Heart left ventricle (tissue), 16 donors: ENCODE measurements at regions of chr14 and their contacts with region 1.

Region 1: GRCh38 chr14:80862983-80863382 is 78.6 kb downstream of the CEP128 start:
- DNase-seq: no peak
- ATAC-seq: no peak
- H3K4me3 ChIP-seq: no peak overlapping the region
- H3K27ac ChIP-seq: no peak overlapping the region
- H3K4me1 ChIP-seq: no peaks in the 10 kb centered on the region
- H3K27me3 ChIP-seq: no peaks in the 10 kb centered on the region
- CTCF ChIP-seq: peak in 2 of 12 donors; percentile 19 to 28
- POLR2A ChIP-seq: no peak

Region 2: GRCh38 chr14:78959674-78960264 is 1903.2 kb before region 1 on chr14:
- intact Hi-C with region 1: loop called in 1 of 10 experiments (anchors 10 kb)
- DNase-seq: peak; percentile 38 to 64 (median 53)
- ATAC-seq: peak in 3 of 4 donors; percentile 60 to 72 (median 62)
- H3K4me3 ChIP-seq: peak overlapping the region in 8 of 12 donors; percentile 1 to 49 (median 34)
- H3K27ac ChIP-seq: peak overlapping the region in 1 of 12 donors; percentile 7
- H3K4me1 ChIP-seq: no peaks in the 10 kb centered on the region
- H3K27me3 ChIP-seq: peaks cover 0 to 7% (median 0%) of the 10 kb centered on the region in 9 donors
- CTCF ChIP-seq: peak; percentile 75 to 88 (median 82)
- POLR2A ChIP-seq: no peak

Region 3: GRCh38 chr14:79986251-79986650 is 876.7 kb before region 1 on chr14:
- intact Hi-C with region 1: no loop called
- DNase-seq: no peak
- ATAC-seq: no peak
- H3K4me3 ChIP-seq: no peak overlapping the region
- H3K27ac ChIP-seq: no peak overlapping the region
- H3K4me1 ChIP-seq: no peaks in the 10 kb centered on the region
- H3K27me3 ChIP-seq: no peaks in the 10 kb centered on the region
- CTCF ChIP-seq: no peak
- POLR2A ChIP-seq: no peak

Region 4: DNA sequence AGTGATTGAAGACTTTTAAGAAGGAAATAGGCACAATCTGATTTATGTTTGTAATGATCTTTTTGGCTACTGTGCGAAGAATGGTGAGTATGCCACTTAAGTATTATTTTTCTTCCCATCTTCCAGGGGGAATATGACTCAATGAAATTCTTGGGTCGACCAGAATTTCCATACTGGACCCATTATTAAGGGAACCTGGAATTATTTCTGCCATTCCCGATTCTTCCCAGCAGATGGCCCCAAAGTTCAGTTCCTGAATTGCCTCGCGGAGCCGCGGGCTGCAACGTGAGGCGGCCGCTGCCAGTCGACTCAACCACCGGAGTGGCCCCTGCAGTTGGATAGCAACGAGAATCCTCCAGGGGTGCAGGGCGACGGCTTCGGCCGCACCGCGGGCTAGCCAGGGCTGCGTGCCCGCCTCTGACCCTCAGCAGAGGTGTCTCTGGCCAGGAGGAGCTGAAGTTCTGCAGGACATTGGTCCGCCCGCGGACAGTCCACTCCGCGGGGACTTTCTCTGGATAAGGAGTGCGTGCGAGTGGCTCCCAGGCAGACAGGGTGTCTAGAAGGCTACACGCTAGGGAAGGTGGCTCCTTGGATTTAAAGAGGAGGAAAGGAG is 91.8 kb after region 1 on chr14:
- intact Hi-C with region 1: no loop called
- DNase-seq: peak; percentile 70 to 88 (median 76)
- ATAC-seq: peak; percentile 76 to 97 (median 92)
- H3K4me3 ChIP-seq: peak overlapping the region; percentile 16 to 67 (median 54)
- H3K27ac ChIP-seq: no peak overlapping the region
- H3K4me1 ChIP-seq: peaks cover 0 to 23% (median 3%) of the 10 kb centered on the region in 12 donors
- H3K27me3 ChIP-seq: peaks cover 0 to 14% (median 3%) of the 10 kb centered on the region in 9 donors
- CTCF ChIP-seq: peak; percentile 69 to 89 (median 79)
- POLR2A ChIP-seq: no peak

Region 5: DNA sequence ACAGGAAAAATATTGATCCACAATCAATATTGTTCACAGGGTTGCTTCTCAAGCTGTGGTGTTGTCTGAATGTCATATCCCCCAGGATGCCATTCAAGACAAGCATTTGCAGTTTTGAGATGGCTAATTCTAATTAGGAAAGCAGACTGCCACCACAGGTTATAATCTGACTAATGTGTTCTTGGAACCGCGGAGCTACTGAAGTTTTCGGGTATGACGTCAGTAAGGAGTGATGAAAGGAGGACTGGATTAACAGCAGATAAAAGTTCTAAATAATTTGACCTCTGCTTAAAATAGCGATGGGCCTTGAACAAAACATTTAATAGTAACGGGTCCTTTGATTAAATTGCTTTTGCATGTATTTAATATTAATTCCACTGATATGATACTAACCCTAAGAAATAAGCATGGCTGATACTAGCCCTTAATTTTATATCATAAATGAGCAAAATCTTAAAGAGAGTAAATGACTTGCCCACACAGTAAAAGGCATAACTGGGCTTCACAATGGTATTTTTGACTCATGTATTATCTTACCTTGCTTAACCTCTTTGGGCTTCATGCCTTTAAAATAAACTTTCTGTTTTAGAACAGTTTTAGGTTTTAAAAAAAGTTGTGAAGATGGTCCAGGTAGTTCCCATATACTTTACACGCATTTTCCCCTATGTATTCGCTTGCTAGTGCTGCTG is 142.7 kb after region 1 on chr14:
- intact Hi-C with region 1: no loop called
- DNase-seq: no peak
- ATAC-seq: peak in 3 of 4 donors; percentile 61 to 77 (median 64)
- H3K4me3 ChIP-seq: no peak overlapping the region
- H3K27ac ChIP-seq: no peak overlapping the region
- H3K4me1 ChIP-seq: peaks cover 0 to 11% (median 0%) of the 10 kb centered on the region in 12 donors
- H3K27me3 ChIP-seq: no peaks in the 10 kb centered on the region
- CTCF ChIP-seq: no peak
- POLR2A ChIP-seq: no peak